GM10248 (cell line): ENCODE measurements at regions of chr2 and their contacts with region 1.

Region 1: GRCh38 chr2:231514103-231514950 is 15.9 kb downstream of the NMUR1 start:
- DNase-seq: peak; percentile 100
- CTCF ChIP-seq: no peak

Region 2: DNA sequence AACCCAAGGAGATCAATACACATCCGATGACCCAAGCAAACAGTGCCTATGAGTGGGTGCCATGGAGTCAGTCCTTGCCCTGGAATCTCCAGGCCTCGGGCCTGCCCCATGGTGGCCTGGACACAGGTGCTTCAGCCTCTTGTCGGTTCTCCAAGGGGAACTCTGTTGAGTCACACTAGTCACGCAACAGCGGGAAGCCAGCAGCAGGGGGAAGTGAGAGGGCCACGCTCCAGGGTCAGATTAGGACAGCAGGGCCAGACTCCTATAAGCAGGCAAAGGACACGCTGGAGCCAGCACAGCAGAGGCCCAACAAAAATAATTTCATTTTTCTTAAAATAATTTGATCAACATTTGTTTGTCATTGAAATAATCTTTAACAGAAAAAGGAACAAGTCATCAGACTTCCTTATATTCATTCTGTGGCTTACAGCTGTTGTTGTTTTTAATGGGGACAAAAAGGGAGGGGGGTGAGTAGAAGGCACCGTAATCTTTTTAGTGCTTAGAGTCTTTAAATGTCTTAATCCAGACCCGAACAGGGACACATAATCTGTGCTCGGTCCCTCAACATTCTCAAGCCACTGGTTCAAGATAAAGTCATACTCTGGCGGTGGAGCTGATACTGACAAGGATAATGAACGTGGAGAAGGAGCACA is 332.3 kb before region 1 on chr2:
- CTCF ChIA-PET with region 1: no interaction called
- POLR2A ChIA-PET with region 1: no interaction called
- DNase-seq: peak; percentile 69
- CTCF ChIP-seq: no peak

Region 3: DNA sequence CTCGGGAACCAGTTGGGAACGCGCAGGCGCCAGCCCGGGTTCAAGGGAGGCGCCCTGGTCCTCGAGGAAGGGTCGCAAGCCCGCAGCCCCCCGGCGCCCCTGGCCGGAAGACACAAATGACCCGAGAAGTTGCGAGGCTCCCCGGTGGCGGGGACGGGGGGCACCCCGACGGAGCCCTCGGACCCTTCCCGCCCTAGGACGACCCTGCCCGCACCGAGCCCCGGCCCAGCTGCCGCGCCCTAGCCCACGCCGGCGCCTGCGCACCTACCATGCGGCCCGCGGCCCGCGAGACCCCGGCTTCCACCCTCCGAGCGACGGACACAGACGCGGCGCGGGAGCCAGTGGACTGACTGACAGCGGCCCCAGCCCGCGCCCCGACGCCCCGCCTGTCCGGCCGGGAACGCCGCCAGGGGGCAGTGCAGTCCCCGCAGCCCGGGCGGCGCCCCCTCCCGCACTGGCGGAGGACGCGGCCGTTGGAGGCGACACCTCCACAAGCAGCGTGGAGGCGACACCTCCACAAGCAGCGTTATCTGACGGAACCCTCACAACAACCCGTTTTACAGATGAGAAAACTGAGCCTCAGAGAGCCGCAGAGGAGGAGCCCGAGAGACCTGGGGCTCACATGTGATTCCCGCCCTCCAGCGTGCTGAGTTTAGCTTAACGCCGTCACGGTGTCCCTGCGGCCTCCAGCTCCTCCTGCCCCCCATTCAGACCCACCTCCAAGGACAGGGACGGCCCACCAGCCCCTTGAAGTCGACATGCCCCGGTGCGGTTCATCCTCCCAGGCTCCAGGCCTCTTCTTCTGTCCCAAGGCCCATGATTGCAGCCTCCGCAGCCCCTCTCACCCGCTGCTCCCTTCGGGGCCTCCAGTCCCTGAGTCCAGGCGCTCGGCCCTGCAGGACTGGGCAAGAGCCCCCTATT is 16.0 kb after region 1 on chr2 and contains the start of gene NMUR1:
- CTCF ChIA-PET with region 1: interaction called, 36 read pairs
- POLR2A ChIA-PET with region 1: no interaction called
- DNase-seq: peak; percentile 87
- CTCF ChIP-seq: peak; percentile 86

Region 4: GRCh38 chr2:231655897-231656296 is 141.6 kb after region 1 on chr2:
- CTCF ChIA-PET with region 1: no interaction called
- POLR2A ChIA-PET with region 1: no interaction called
- DNase-seq: peak; percentile 10
- CTCF ChIP-seq: no peak